ENCODE measurements at regions of chr14 and their contacts with region 1.

Region 1: GRCh38 chr14:36767603-36768281 is 106.1 kb downstream of the PAX9 start:
- DNase-seq: no peak
- H3K4me3 ChIP-seq: no peak overlapping the region
- H3K27ac ChIP-seq: no peak overlapping the region
- H3K4me1 ChIP-seq: no peaks in the 10 kb centered on the region
- H3K27me3 ChIP-seq: no peaks in the 10 kb centered on the region
- CTCF ChIP-seq: no peak

Region 2: DNA sequence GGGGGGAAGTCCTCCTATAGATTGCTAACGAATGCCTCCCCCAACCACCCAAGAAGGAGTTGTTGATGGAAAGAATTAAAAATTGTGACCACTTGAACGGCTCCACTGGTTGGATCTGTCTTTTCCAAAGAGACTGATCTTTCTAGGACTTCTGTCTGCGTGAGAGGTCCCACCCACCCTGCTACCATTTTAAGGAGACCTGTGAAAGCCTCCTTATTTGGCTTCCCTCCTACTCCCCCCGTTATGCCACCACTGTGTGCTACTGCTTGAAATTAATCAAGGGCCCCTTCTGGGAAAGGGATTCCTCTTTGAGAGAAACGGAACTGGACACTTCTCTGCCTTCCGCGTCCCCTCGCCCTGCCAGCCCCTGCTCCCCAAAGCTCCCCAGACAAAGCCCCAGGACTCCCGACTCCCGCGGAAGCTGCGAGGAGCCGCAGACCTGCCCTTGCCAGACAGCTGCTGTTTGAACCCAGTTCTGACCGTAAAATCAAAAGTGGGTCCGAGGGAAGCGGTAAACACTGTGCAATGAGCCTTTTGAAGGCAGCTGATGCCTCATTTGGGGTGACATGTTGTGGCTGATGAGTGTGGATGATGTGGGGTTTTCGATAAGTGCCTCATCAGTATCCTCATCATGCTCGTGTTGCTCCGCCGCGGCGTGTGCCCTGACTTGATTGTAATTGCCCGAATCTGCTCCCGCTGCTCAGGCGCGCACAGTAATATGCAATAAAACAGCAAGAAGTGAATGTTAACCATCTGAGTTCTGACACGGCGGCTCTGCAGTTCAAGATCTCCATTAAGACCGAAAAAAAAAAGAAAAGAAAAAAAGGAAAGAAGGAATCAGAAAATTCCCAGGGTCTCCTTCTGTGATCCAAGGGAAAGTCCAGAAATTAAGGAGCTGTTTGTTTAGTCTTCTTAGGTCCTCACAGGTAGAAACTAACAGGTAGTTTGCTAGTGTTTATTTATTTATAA is 495.5 kb before region 1 on chr14:
- intact Hi-C with region 1: no loop called
- DNase-seq: peak in 1 of 2 donors; percentile 22
- H3K4me3 ChIP-seq: peak overlapping the region; percentile 23 to 29
- H3K27ac ChIP-seq: no peak overlapping the region
- H3K4me1 ChIP-seq: peaks cover 0 to 11% (median 4%) of the 10 kb centered on the region in 4 donors
- H3K27me3 ChIP-seq: peaks cover 0 to 19% of the 10 kb centered on the region in 2 donors
- CTCF ChIP-seq: no peak

Region 3: GRCh38 chr14:36655963-36656686 is 111.6 kb before region 1 on chr14:
- intact Hi-C with region 1: no loop called
- DNase-seq: no peak
- H3K4me3 ChIP-seq: no peak overlapping the region
- H3K27ac ChIP-seq: no peak overlapping the region
- H3K4me1 ChIP-seq: peaks cover 0 to 48% (median 33%) of the 10 kb centered on the region in 4 donors
- H3K27me3 ChIP-seq: peaks cover 22 to 100% of the 10 kb centered on the region in 2 donors
- CTCF ChIP-seq: peak; percentile 21 to 44

Region 4: DNA sequence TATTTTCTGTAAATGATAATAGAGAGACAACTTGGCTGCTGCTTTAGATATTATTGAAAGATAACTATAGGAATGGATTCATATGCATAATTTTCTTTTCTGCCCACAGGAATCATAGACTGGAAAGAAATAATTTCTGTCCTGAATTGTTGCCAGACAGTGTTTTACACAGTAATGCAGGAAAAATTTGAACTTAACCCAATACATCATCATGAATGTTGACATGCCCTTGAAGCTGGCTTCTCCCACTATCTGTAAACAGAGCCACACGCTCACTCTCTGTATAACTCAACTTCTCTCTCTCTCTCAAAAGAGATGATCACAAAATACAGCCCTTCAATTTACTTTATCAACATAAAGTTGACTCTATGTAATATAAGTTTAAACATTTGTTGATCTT is 49.5 kb before region 1 on chr14:
- intact Hi-C with region 1: loop called (anchors 2 kb)
- DNase-seq: no peak
- H3K4me3 ChIP-seq: no peak overlapping the region
- H3K27ac ChIP-seq: no peak overlapping the region
- H3K4me1 ChIP-seq: no peaks in the 10 kb centered on the region
- H3K27me3 ChIP-seq: no peaks in the 10 kb centered on the region
- CTCF ChIP-seq: no peak